ENCODE measurements at regions of chr3 and their contacts with region 1.

Region 1: DNA sequence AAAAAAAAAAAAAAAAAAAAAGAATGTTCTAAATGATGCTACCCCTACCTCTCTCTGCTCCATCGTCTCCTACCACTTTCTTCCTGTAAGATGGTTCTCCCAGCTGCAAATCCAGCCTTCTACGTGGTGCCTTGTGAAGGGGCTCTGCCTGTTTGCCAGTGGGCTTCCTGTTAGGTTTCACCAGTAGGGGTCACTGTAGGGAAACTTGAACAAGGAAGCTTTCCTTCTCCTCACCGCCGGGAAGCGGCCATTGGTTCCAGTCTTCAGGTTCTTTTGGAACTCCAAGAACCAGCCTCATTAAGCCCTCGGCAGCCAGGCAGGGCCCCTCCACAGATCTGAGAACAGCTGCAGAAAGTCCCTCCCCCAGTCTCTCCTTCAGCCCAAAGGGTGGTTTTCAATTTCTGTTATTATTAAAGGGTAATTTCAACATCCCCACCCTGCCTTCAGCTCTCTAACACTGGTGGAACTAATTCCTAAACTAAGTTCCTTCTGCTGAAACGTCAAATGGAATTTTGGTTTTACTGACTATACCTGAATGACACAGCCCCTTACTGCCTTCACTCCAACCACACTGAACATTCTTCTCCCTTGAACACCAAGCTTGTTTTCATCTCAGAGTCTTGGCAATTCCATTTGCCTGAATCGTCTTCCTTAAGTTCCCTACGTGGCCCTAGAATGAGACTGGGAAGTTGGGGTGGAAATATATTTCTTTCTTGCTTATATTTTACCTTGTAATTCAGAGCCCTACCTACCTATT is 13.5 kb downstream of the MCCC1 start:
- DNase-seq: peak; percentile 29
- ATAC-seq: no peak
- H3K4me3 Mint-ChIP-seq: no peak overlapping the region
- H3K27ac Mint-ChIP-seq: no peak overlapping the region
- H3K4me1 Mint-ChIP-seq: no peaks in the 10 kb centered on the region
- H3K27me3 Mint-ChIP-seq: no peaks in the 10 kb centered on the region
- CTCF ChIP-seq: peak; percentile 65

Region 2: GRCh38 chr3:183046883-183047282 is 38.9 kb before region 1 on chr3:
- CTCF ChIA-PET with region 1: interaction called, 11 read pairs
- POLR2A ChIA-PET with region 1: no interaction called
- intact Hi-C with region 1: no loop called
- DNase-seq: no peak
- ATAC-seq: no peak
- H3K4me3 Mint-ChIP-seq: no peak overlapping the region
- H3K27ac Mint-ChIP-seq: no peak overlapping the region
- H3K4me1 Mint-ChIP-seq: peaks cover 4% of the 10 kb centered on the region
- H3K27me3 Mint-ChIP-seq: no peaks in the 10 kb centered on the region
- CTCF ChIP-seq: no peak

Region 3: DNA sequence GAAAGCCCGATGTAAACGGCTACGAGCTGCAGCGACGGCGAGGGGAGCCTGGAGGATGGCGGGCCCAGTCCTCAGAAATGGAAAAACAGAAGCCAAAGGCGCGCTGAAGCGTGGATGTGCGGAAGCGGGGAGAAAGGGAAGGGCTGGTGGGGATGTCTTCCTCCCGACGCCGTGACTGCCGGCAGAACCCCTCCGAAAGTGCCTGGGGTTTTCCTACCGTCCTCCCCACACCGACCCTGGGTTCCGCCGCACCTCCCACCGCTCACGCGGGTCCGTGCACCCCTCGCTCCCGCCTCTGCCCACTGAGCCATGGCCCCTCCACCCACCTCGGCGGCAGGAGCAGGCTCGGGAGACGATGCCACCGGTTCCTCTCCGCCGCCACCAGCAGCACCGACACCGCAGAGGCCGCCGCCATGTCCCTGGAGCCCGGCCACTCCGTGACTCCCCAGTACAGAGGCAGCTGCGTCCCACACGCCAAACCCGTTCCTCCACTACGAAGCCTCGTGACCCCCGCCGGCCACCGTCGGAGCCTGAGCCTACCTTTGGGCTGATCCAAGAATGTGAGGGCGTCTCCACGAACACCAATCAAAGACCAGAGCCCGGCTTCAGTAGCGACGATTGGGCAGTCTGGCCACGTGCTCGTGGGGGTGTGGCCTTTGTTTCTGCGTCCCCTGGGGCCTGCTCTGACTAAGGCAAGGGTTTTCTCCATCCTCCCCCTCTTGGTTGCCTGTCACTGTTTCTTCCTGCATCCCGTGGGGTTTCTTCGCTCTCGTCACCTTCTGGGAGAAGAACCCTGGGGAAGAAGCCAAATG is 13.4 kb after region 1 on chr3 and contains the start of gene MCCC1:
- CTCF ChIA-PET with region 1: interaction called, 58 read pairs
- POLR2A ChIA-PET with region 1: no interaction called
- intact Hi-C with region 1: no loop called
- DNase-seq: peak; percentile 99
- ATAC-seq: peak; percentile 99
- H3K4me3 Mint-ChIP-seq: peak within 1 kb of the TSS; percentile 96
- H3K27ac Mint-ChIP-seq: peak within 1 kb of the TSS; percentile 97
- H3K4me1 Mint-ChIP-seq: peaks cover 41% of the 10 kb centered on the region
- H3K27me3 Mint-ChIP-seq: no peaks in the 10 kb centered on the region
- CTCF ChIP-seq: no peak
- total RNA-seq, gene MCCC1: 35.0 to 38.0 TPM

Region 4: GRCh38 chr3:183148056-183148455 is 62.2 kb after region 1 on chr3:
- CTCF ChIA-PET with region 1: no interaction called
- POLR2A ChIA-PET with region 1: no interaction called
- intact Hi-C with region 1: no loop called
- DNase-seq: no peak
- ATAC-seq: no peak
- H3K4me3 Mint-ChIP-seq: no peak overlapping the region
- H3K27ac Mint-ChIP-seq: no peak overlapping the region
- H3K4me1 Mint-ChIP-seq: no peaks in the 10 kb centered on the region
- H3K27me3 Mint-ChIP-seq: no peaks in the 10 kb centered on the region
- CTCF ChIP-seq: no peak